Activated naive CD4-positive, alpha-beta T cell treated with anti-CD3 and anti-CD28 coated beads for 36 hours (primary cell): ENCODE measurements at regions of chr6 and their contacts with region 1.

Region 1: GRCh38 chr6:27838058-27838944 is 73.9 kb downstream of the OR2B2 start:
- DNase-seq: peak; percentile 87
- H3K4me3 Mint-ChIP-seq: no peak overlapping the region
- H3K27ac Mint-ChIP-seq: no peak overlapping the region
- H3K4me1 Mint-ChIP-seq: peaks cover 26% of the 10 kb centered on the region
- H3K27me3 Mint-ChIP-seq: peaks cover 7% of the 10 kb centered on the region

Region 2: GRCh38 chr6:26025894-26026832 is 1812.1 kb before region 1 on chr6:
- CTCF ChIA-PET with region 1: no interaction called
- intact Hi-C with region 1: loop called (anchors 10 kb)
- DNase-seq: peak; percentile 98
- H3K4me3 Mint-ChIP-seq: peak overlapping the region; percentile 87
- H3K27ac Mint-ChIP-seq: peak overlapping the region; percentile 99
- H3K4me1 Mint-ChIP-seq: peaks cover 31% of the 10 kb centered on the region
- H3K27me3 Mint-ChIP-seq: no peaks in the 10 kb centered on the region

Region 3: GRCh38 chr6:27809939-27810767 is 28.1 kb before region 1 on chr6:
- CTCF ChIA-PET with region 1: no interaction called
- intact Hi-C with region 1: loop called (anchors 1 kb)
- DNase-seq: peak; percentile 81
- H3K4me3 Mint-ChIP-seq: peak overlapping the region; percentile 93
- H3K27ac Mint-ChIP-seq: peak overlapping the region; percentile 95
- H3K4me1 Mint-ChIP-seq: peaks cover 41% of the 10 kb centered on the region
- H3K27me3 Mint-ChIP-seq: peaks cover 3% of the 10 kb centered on the region

Region 4: GRCh38 chr6:27864906-27865849 is 26.9 kb after region 1 on chr6:
- CTCF ChIA-PET with region 1: interaction called, 5 read pairs
- intact Hi-C with region 1: loop called (anchors 1 kb)
- DNase-seq: peak; percentile 84
- H3K4me3 Mint-ChIP-seq: peak overlapping the region; percentile 97
- H3K27ac Mint-ChIP-seq: peak overlapping the region; percentile 96
- H3K4me1 Mint-ChIP-seq: peaks cover 26% of the 10 kb centered on the region
- H3K27me3 Mint-ChIP-seq: peaks cover 8% of the 10 kb centered on the region

Region 5: GRCh38 chr6:28863604-28864320 is 1025.5 kb after region 1 on chr6:
- CTCF ChIA-PET with region 1: no interaction called
- intact Hi-C with region 1: loop called (anchors 10 kb)
- DNase-seq: peak; percentile 89
- H3K4me3 Mint-ChIP-seq: peak overlapping the region; percentile 86
- H3K27ac Mint-ChIP-seq: peak overlapping the region; percentile 92
- H3K4me1 Mint-ChIP-seq: peaks cover 33% of the 10 kb centered on the region
- H3K27me3 Mint-ChIP-seq: peaks cover 3% of the 10 kb centered on the region